GM12878 (cell line): ENCODE measurements at regions of chr1 and their contacts with region 1.

Region 1: DNA sequence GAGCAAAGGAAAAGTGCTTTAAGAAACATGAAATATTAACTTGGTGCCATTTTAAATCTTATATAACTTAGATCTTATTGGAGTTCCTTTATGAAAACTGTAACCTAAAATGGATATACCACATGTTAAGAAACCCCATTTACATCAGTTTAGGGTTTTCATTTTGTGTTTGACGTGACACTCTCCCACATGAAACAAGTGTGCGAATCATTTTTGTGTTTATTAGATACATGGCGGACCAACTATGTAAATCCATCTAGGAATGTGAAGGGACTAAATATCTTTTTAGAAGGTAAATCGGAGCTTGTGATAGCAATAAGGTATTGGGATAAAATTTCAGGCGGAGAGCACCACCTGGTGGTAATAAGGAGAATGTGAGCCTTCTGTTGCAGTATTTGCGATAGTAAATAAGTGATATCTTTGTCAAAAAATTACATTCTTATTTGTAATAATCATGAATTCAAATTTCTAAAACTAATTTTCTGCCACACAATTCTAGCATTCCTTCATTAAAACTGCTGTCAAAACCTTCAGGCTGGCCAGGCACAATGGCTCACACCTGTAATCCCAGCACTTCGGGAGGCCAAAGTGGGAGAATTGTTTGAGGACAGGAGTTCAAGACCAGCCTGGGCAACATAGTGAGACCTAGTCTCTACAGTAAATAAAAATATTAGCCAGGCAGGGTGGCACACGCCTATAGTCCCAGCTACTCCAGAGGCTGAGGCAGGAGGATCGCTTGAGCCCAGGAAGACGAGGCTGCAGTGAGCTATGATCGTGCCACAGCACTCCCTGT is 31.3 kb downstream of the SMAP2 start:
- DNase-seq: no peak
- ATAC-seq: peak; percentile 21
- H3K4me3 ChIP-seq: 0 out of 2 replicates have a peak overlapping the region, but pooled peaks have one; percentile 2
- H3K27ac ChIP-seq: peak overlapping the region; percentile 68
- H3K4me1 ChIP-seq: peaks cover 45% of the 10 kb centered on the region
- H3K27me3 ChIP-seq: no peaks in the 10 kb centered on the region
- CTCF ChIP-seq: peak; percentile 65 to 74 (median 72)
- EP300 ChIP-seq: no peak
- POLR2A ChIP-seq: no peak
- RAD21 ChIP-seq: peak; percentile 82

Region 2: DNA sequence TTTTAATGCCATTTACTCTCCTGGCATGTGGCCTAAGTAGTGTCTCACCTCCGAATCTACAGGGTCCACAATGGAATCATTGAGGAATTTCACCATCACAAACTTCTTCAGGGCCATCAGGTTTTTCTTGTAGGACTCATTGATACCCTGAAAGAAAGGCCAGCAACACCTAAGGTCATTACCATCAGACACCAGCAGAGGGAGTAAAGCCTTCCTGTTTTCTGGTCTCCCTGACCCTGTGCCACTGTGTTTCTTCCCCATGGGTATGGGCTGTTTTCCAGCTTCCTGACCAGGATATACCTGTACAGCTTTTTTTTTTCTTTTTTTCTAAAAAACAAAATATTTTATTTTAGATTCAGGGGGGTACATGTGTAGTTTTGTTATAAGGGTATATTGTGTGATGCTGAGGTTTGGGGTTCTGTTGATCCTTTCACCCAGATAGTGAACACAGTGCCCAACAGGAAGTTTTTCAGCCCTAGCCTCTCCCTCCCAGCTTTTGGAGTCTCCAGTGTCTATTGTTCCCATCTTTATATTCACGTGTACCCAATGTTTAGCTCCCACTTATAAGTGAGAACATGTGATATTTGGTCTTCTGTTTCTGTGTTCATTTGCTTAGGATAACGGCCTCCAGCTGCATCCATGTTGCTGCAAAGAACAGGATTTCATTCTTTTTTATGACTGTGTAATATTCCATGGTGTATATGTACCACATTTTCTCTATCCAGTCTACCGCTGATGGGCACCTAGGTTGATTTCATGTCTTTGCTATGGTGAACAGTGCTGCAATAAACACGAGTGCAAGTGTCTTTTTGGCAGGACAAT is 326.1 kb before region 1 on chr1:
- CTCF ChIA-PET with region 1: interaction called, 8 read pairs
- POLR2A ChIA-PET with region 1: no interaction called
- RAD21 ChIA-PET with region 1: no interaction called
- SMC1A ChIA-PET with region 1: interaction called, 7 read pairs
- in situ Hi-C with region 1: loop called (anchors 5 kb)
- intact Hi-C with region 1: no loop called
- DNase-seq: no peak
- ATAC-seq: peak; percentile 98
- H3K4me3 ChIP-seq: no peak overlapping the region
- H3K27ac ChIP-seq: no peak overlapping the region
- H3K4me1 ChIP-seq: no peaks in the 10 kb centered on the region
- H3K27me3 ChIP-seq: no peaks in the 10 kb centered on the region
- CTCF ChIP-seq: peak; percentile 74 to 85 (median 75)
- EP300 ChIP-seq: no peak
- POLR2A ChIP-seq: no peak
- RAD21 ChIP-seq: peak; percentile 63

Region 3: GRCh38 chr1:40143891-40144575 is 260.8 kb before region 1 on chr1:
- CTCF ChIA-PET with region 1: interaction called, 40 read pairs
- POLR2A ChIA-PET with region 1: interaction called, 4 read pairs
- RAD21 ChIA-PET with region 1: interaction called, 14 read pairs
- SMC1A ChIA-PET with region 1: interaction called, 11 read pairs
- in situ Hi-C with region 1: no loop called
- intact Hi-C with region 1: loop called (anchors 2 kb)
- DNase-seq: peak; percentile 39
- ATAC-seq: peak; percentile 96
- H3K4me3 ChIP-seq: no peak overlapping the region
- H3K27ac ChIP-seq: no peak overlapping the region
- H3K4me1 ChIP-seq: no peaks in the 10 kb centered on the region
- H3K27me3 ChIP-seq: no peaks in the 10 kb centered on the region; a peak in 1 of 4 replicates
- CTCF ChIP-seq: peak; percentile 69 to 84 (median 72)
- EP300 ChIP-seq: no peak
- POLR2A ChIP-seq: no peak
- RAD21 ChIP-seq: peak; percentile 95

Region 4: DNA sequence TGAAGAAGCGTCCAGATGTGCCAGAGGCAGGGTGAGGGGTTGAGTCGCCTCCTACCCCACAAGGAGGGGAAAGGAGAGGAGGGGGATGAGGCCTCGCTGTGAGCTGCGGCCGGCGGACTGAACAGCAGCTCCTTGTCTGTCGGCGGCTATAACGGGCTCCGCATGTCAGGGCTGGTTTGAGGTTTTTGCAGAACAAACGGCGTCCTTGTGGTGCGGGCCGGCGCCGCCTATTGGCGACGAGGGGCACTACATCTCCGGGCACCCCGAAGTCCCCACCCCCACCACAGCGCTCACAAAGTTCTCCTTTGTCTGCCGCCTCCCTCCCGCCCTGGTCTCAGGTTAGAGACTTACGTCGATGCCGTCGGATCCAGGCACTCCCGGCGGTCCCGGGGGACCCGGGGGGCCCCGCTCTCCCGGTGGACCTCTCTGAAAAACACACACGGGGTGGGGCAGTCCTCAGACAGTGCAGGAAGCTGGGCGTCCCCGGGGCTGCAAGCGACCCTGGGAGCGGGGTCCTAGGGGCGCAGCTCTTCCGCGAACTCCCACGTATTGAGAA is 89.5 kb before region 1 on chr1:
- CTCF ChIA-PET with region 1: interaction called, 77 read pairs
- POLR2A ChIA-PET with region 1: interaction called, 12 read pairs
- RAD21 ChIA-PET with region 1: interaction called, 15 read pairs
- SMC1A ChIA-PET with region 1: interaction called, 18 read pairs
- in situ Hi-C with region 1: no loop called
- intact Hi-C with region 1: no loop called
- DNase-seq: peak; percentile 53
- ATAC-seq: peak; percentile 72
- H3K4me3 ChIP-seq: peak overlapping the region; percentile 70
- H3K27ac ChIP-seq: peak overlapping the region; percentile 59
- H3K4me1 ChIP-seq: peaks cover 41% of the 10 kb centered on the region
- H3K27me3 ChIP-seq: peaks cover 4 to 9% of the 10 kb centered on the region in 2 experiments; a peak in 3 of 4 replicates
- CTCF ChIP-seq: peak; percentile 96 to 98 (median 98)
- EP300 ChIP-seq: peak in 1 of 2 experiments; percentile 24; a peak in 1 of 4 replicates
- POLR2A ChIP-seq: peak; percentile 87
- RAD21 ChIP-seq: peak; percentile 69

Region 5: GRCh38 chr1:40344597-40344996 is 60.3 kb before region 1 on chr1:
- CTCF ChIA-PET with region 1: interaction called, 148 read pairs
- POLR2A ChIA-PET with region 1: interaction called, 4 read pairs
- RAD21 ChIA-PET with region 1: interaction called, 64 read pairs
- SMC1A ChIA-PET with region 1: interaction called, 117 read pairs
- in situ Hi-C with region 1: loop called (anchors 5 kb)
- intact Hi-C with region 1: no loop called
- DNase-seq: no peak
- ATAC-seq: peak; percentile 79
- H3K4me3 ChIP-seq: no peak overlapping the region
- H3K27ac ChIP-seq: no peak overlapping the region
- H3K4me1 ChIP-seq: peaks cover 5% of the 10 kb centered on the region; the same call in 1 of the 2 replicates
- H3K27me3 ChIP-seq: no peaks in the 10 kb centered on the region
- CTCF ChIP-seq: 0 out of 6 replicates have a peak, but pooled peaks of 1 of the 3 experiments have one; percentile 13
- EP300 ChIP-seq: no peak
- POLR2A ChIP-seq: no peak
- RAD21 ChIP-seq: no peak

Region 6: GRCh38 chr1:40363721-40364120 is 41.1 kb before region 1 on chr1:
- CTCF ChIA-PET with region 1: interaction called, 24 read pairs
- POLR2A ChIA-PET with region 1: interaction called, 4 read pairs
- RAD21 ChIA-PET with region 1: interaction called, 18 read pairs
- SMC1A ChIA-PET with region 1: interaction called, 16 read pairs
- in situ Hi-C with region 1: no loop called
- intact Hi-C with region 1: no loop called
- DNase-seq: no peak
- ATAC-seq: peak; percentile 100
- H3K4me3 ChIP-seq: no peak overlapping the region
- H3K27ac ChIP-seq: no peak overlapping the region
- H3K4me1 ChIP-seq: no peaks in the 10 kb centered on the region; the same call in 1 of the 2 replicates
- H3K27me3 ChIP-seq: no peaks in the 10 kb centered on the region
- CTCF ChIP-seq: peak; percentile 28 to 43 (median 36); a peak in 4 of 6 replicates
- EP300 ChIP-seq: no peak
- POLR2A ChIP-seq: no peak
- RAD21 ChIP-seq: peak; percentile 32

Region 7: GRCh38 chr1:40385437-40386358 is 19.2 kb before region 1 on chr1:
- CTCF ChIA-PET with region 1: interaction called, 271 read pairs
- POLR2A ChIA-PET with region 1: interaction called, 243 read pairs
- RAD21 ChIA-PET with region 1: interaction called, 189 read pairs
- SMC1A ChIA-PET with region 1: interaction called, 426 read pairs
- in situ Hi-C with region 1: no loop called
- intact Hi-C with region 1: loop called (anchors 1 kb)
- DNase-seq: peak; percentile 98
- ATAC-seq: peak; percentile 72
- H3K4me3 ChIP-seq: peak overlapping the region; percentile 66
- H3K27ac ChIP-seq: peak overlapping the region; percentile 97
- H3K4me1 ChIP-seq: peaks cover 65% of the 10 kb centered on the region
- H3K27me3 ChIP-seq: no peaks in the 10 kb centered on the region
- CTCF ChIP-seq: no peak
- EP300 ChIP-seq: peak; percentile 98 to 99
- POLR2A ChIP-seq: no peak
- RAD21 ChIP-seq: peak; percentile 15; the same call in 1 of the 2 replicates

Region 8: GRCh38 chr1:41192456-41193178 is 787.8 kb after region 1 on chr1:
- CTCF ChIA-PET with region 1: no interaction called
- POLR2A ChIA-PET with region 1: no interaction called
- RAD21 ChIA-PET with region 1: no interaction called
- SMC1A ChIA-PET with region 1: no interaction called
- in situ Hi-C with region 1: no loop called
- intact Hi-C with region 1: no loop called
- DNase-seq: no peak
- ATAC-seq: no peak
- H3K4me3 ChIP-seq: no peak overlapping the region
- H3K27ac ChIP-seq: no peak overlapping the region
- H3K4me1 ChIP-seq: no peaks in the 10 kb centered on the region
- H3K27me3 ChIP-seq: no peaks in the 10 kb centered on the region
- CTCF ChIP-seq: no peak
- EP300 ChIP-seq: no peak
- POLR2A ChIP-seq: no peak
- RAD21 ChIP-seq: no peak